ENCODE measurements at regions of chr18 and their contacts with region 1.

Region 1: GRCh38 chr18:10560450-10561045 is 34.7 kb downstream of the NAPG start:
- DNase-seq: peak; percentile 48
- ATAC-seq: peak; percentile 90
- H3K4me3 ChIP-seq: peak overlapping the region; percentile 21; the same call in 1 of the 2 replicates
- H3K27ac ChIP-seq: peak overlapping the region; percentile 66
- H3K4me1 ChIP-seq: peaks cover 5% of the 10 kb centered on the region
- H3K27me3 ChIP-seq: no peaks in the 10 kb centered on the region
- CTCF ChIP-seq: peak; percentile 69 to 80 (median 78)
- EP300 ChIP-seq: no peak
- POLR2A ChIP-seq: no peak
- RAD21 ChIP-seq: peak; percentile 89

Region 2: GRCh38 chr18:10530852-10531251 is 29.7 kb before region 1 on chr18:
- CTCF ChIA-PET with region 1: interaction called, 12 read pairs
- POLR2A ChIA-PET with region 1: no interaction called
- RAD21 ChIA-PET with region 1: interaction called, 5 read pairs
- SMC1A ChIA-PET with region 1: no interaction called
- in situ Hi-C with region 1: no loop called
- intact Hi-C with region 1: no loop called
- DNase-seq: no peak
- ATAC-seq: no peak
- H3K4me3 ChIP-seq: no peak overlapping the region
- H3K27ac ChIP-seq: no peak overlapping the region
- H3K4me1 ChIP-seq: peaks cover 10% of the 10 kb centered on the region
- H3K27me3 ChIP-seq: no peaks in the 10 kb centered on the region
- CTCF ChIP-seq: no peak
- EP300 ChIP-seq: no peak
- POLR2A ChIP-seq: no peak
- RAD21 ChIP-seq: no peak

Region 3: GRCh38 chr18:10571537-10571936 is 11.0 kb after region 1 on chr18:
- CTCF ChIA-PET with region 1: interaction called, 15 read pairs
- POLR2A ChIA-PET with region 1: no interaction called
- RAD21 ChIA-PET with region 1: no interaction called
- SMC1A ChIA-PET with region 1: no interaction called
- in situ Hi-C with region 1: no loop called
- intact Hi-C with region 1: no loop called
- DNase-seq: no peak
- ATAC-seq: no peak
- H3K4me3 ChIP-seq: no peak overlapping the region
- H3K27ac ChIP-seq: no peak overlapping the region
- H3K4me1 ChIP-seq: no peaks in the 10 kb centered on the region
- H3K27me3 ChIP-seq: no peaks in the 10 kb centered on the region
- CTCF ChIP-seq: no peak
- EP300 ChIP-seq: no peak
- POLR2A ChIP-seq: no peak
- RAD21 ChIP-seq: no peak

Region 4: GRCh38 chr18:10660179-10660884 is 99.8 kb after region 1 on chr18:
- CTCF ChIA-PET with region 1: interaction called, 26 read pairs
- POLR2A ChIA-PET with region 1: no interaction called
- RAD21 ChIA-PET with region 1: interaction called, 3 read pairs
- SMC1A ChIA-PET with region 1: interaction called, 15 read pairs
- in situ Hi-C with region 1: no loop called
- intact Hi-C with region 1: no loop called
- DNase-seq: peak; percentile 24
- ATAC-seq: peak; percentile 96
- H3K4me3 ChIP-seq: no peak overlapping the region
- H3K27ac ChIP-seq: no peak overlapping the region
- H3K4me1 ChIP-seq: peaks cover 10% of the 10 kb centered on the region
- H3K27me3 ChIP-seq: no peaks in the 10 kb centered on the region
- CTCF ChIP-seq: no peak
- EP300 ChIP-seq: no peak
- POLR2A ChIP-seq: no peak
- RAD21 ChIP-seq: no peak

Region 5: DNA sequence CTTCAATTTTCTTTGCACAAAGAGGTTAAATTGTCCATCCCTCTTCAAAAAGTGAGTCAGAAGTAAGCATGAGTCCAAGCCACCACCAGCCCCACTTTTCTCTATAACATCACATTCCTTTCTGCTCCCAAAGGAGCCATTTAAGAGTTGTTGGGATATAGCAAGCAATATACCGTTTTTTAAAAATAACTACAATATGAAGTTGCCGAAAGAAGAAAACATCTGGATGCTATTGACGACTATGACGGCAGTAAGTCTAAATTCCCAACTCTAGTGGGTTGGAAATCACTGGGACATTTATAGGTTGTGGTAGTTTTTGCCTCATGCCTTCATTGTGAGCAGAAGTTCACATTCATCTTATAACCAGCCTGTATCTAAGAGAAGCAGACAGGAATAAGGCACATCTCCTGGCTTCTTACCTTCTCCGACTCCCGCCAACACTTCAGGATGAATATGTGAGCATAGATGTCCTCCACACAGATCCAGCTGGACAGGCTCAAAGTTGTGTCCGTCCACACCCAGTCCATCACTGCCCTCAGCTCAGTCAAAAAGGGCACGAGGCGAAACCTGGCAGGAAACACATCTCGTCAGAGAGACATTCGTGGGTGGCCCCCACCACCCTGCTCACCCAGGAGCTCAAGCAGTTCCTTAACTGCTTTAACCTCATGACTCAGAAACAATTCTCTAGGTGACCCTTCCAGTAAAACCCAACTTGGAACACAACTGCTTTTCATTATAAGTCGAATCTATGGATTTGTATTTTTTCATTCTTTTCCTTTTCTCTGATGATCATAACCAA is 128.9 kb after region 1 on chr18:
- CTCF ChIA-PET with region 1: interaction called, 7 read pairs
- POLR2A ChIA-PET with region 1: interaction called, 3 read pairs
- RAD21 ChIA-PET with region 1: no interaction called
- SMC1A ChIA-PET with region 1: interaction called, 14 read pairs
- in situ Hi-C with region 1: no loop called
- intact Hi-C with region 1: loop called (anchors 10 kb)
- DNase-seq: no peak
- ATAC-seq: no peak
- H3K4me3 ChIP-seq: no peak overlapping the region
- H3K27ac ChIP-seq: peak overlapping the region; percentile 6; the same call in 1 of the 2 replicates
- H3K4me1 ChIP-seq: no peaks in the 10 kb centered on the region; the same call in 1 of the 2 replicates
- H3K27me3 ChIP-seq: no peaks in the 10 kb centered on the region
- CTCF ChIP-seq: no peak
- EP300 ChIP-seq: no peak
- POLR2A ChIP-seq: no peak
- RAD21 ChIP-seq: no peak

Region 6: DNA sequence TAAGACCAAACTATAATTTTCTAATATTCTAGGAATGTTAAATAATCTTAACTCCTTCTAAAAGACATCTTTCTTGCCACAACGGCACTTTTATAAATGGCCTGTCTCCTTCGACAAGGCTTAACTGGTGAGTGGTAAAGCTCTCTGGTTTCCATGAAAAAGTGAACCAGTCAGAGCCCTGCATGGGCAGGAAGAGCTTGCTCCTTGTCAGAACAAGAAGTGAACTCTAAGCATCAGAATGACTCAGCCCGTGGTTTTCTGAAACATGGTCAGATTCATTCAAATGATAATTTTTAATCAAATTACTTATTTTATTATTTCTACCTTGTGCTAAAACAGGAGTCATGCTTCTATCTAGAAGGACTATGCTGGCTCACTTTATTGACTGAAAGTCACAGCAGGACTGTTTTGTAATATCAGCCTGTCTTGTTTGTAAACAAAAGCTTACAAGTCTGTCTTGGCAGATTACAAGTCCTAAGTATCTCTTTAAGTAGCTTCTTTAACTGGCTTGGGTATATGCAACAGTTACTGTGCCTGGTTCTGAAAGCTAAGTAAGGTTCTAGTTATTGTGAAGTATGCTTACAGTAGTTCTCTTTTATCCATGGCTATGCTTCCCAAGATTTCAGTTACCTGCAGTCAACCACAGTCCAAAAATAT is 210.6 kb after region 1 on chr18:
- CTCF ChIA-PET with region 1: interaction called, 5 read pairs
- POLR2A ChIA-PET with region 1: no interaction called
- RAD21 ChIA-PET with region 1: interaction called, 5 read pairs
- SMC1A ChIA-PET with region 1: interaction called, 5 read pairs
- in situ Hi-C with region 1: no loop called
- intact Hi-C with region 1: loop called (anchors 5 kb)
- DNase-seq: peak; percentile 17
- ATAC-seq: peak; percentile 93
- H3K4me3 ChIP-seq: no peak overlapping the region
- H3K27ac ChIP-seq: peak overlapping the region; percentile 26; the same call in 1 of the 2 replicates
- H3K4me1 ChIP-seq: peaks cover 3% of the 10 kb centered on the region; the same call in 1 of the 2 replicates
- H3K27me3 ChIP-seq: no peaks in the 10 kb centered on the region
- CTCF ChIP-seq: no peak
- EP300 ChIP-seq: no peak
- POLR2A ChIP-seq: no peak
- RAD21 ChIP-seq: no peak

Region 7: DNA sequence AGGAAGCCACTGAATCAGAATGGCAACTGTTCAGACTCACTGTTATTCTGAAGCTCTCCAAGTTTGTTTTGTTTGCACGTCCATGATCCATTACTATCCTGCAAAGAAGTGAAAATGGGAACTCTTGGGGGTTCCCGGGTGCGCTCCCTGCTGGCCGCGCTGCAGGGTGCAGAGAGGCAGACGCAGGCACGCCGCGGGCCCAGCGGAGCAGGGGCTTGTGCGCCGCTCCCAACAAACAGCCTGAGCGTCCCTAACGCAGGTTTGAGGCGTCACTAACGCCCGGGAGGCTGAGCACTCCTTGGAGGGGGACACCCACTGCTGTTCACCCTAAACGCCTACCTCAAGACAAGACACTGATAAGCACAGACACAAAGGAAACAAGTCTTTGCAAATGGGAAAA is 603.1 kb after region 1 on chr18:
- CTCF ChIA-PET with region 1: interaction called, 191 read pairs
- POLR2A ChIA-PET with region 1: no interaction called
- RAD21 ChIA-PET with region 1: interaction called, 4 read pairs
- SMC1A ChIA-PET with region 1: interaction called, 4 read pairs
- in situ Hi-C with region 1: no loop called
- intact Hi-C with region 1: no loop called
- DNase-seq: no peak
- ATAC-seq: peak; percentile 94
- H3K4me3 ChIP-seq: no peak overlapping the region
- H3K27ac ChIP-seq: no peak overlapping the region
- H3K4me1 ChIP-seq: peaks cover 9% of the 10 kb centered on the region
- H3K27me3 ChIP-seq: no peaks in the 10 kb centered on the region
- CTCF ChIP-seq: peak; percentile 61 to 88 (median 62)
- EP300 ChIP-seq: no peak
- POLR2A ChIP-seq: no peak
- RAD21 ChIP-seq: peak; percentile 25; the same call in 1 of the 2 replicates

Measured in GM12878 (cell line).